Cardiac septum (tissue), 1 donor: ENCODE measurements at regions of chr7 and their contacts with region 1.

Region 1: GRCh38 chr7:2863461-2864066 is 19.5 kb upstream of the GNA12 start:
- DNase-seq: peak; percentile 86

Region 2: GRCh38 chr7:3154912-3155494 is 291.4 kb after region 1 on chr7:
- intact Hi-C with region 1: loop called (anchors 10 kb)
- DNase-seq: no peak